HepG2 (cell line): ENCODE measurements at regions of chr21 and their contacts with region 1.

Region 1: DNA sequence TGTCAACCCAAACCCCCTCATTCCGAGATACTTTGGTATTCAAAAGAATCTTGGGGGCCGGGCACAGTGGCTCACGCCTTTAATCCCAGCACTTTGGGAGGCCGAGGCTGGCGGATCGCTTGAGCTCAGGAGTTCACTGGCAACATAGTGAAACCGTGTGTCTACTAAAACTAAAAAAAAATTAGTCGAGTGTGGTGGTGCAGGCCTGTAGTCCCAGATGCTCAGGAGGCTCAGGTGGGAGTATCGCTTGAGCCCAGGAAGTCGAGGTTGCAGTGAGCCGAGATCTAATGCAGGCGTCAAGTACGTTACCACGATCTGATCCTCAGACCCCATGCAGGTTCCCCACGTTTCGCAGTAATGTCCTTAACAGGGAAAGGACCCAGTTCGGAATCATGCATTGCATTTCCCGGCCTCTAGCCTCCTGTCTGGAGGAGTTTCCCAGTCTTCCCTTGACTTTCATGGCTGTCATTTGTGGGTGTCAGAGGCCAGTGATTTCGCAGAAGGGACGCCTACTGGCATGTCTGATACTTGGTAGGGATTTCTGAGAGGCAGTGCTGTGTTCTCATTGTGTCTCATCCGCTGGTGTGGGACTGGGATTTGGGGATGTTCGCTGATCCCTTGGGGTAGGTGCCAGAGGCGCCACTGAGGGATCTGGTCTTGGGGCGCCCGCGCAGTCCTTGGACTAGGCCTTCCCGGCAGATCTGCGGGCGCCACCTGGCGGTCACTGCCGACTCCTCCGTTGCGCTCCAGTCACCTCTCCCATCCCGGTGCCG is 39.3 kb upstream of the HMGN1 start:
- DNase-seq: peak; percentile 67
- ATAC-seq: peak; percentile 80
- H3K4me3 ChIP-seq: peak overlapping the region; percentile 54 to 70 (median 55)
- H3K27ac ChIP-seq: peak overlapping the region; percentile 69
- H3K4me1 ChIP-seq: peaks cover 32% of the 10 kb centered on the region
- H3K27me3 ChIP-seq: no peaks in the 10 kb centered on the region
- CTCF ChIP-seq: peak; percentile 97
- EP300 ChIP-seq: no peak
- POLR2A ChIP-seq: peak in 1 of 2 experiments; percentile 37; a peak in 1 of 4 replicates
- RAD21 ChIP-seq: peak; percentile 94

Region 2: DNA sequence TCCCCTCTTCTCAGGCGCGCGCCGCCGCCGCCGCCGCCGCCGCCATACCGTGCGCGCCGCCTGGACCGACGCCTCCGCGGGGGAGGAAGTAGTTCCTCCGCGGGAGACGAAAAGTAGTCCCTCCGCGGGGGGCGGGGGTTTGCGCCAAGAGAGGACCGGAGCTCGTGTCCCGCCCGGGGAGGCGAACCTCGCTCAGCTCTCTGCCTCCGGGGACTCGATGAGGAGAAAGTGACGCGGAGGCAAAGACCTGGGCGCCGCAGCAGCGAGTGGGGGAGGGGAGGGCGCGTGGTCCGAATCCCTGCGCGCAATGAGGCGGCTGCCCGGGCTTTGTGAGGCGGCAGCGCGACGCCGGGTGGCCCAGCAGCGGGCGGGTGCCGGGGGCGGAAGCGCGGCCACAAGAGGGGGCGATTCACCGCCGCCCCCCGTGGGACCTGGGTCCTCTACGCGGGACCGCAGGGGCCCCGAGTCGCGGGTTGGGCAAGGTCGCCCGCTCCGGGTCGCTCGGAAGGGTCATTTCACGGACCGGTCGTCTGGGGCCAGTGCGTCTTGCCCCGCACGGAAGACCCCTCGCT is 74.6 kb before region 1 on chr21 and contains the start of gene BRWD1:
- CTCF ChIA-PET with region 1: interaction called, 10 read pairs
- POLR2A ChIA-PET with region 1: interaction called, 47 read pairs
- in situ Hi-C with region 1: no loop called
- intact Hi-C with region 1: loop called (anchors 2 kb)
- DNase-seq: peak; percentile 72
- ATAC-seq: peak; percentile 77
- H3K4me3 ChIP-seq: peak within 1 kb of the TSS; percentile 61 to 76 (median 72)
- H3K27ac ChIP-seq: peak within 1 kb of the TSS; percentile 98
- H3K4me1 ChIP-seq: peaks cover 41% of the 10 kb centered on the region
- H3K27me3 ChIP-seq: no peaks in the 10 kb centered on the region; a peak in 1 of 5 replicates
- CTCF ChIP-seq: peak; percentile 60
- EP300 ChIP-seq: no peak
- POLR2A ChIP-seq: peak; percentile 49 to 58; a peak in 3 of 4 replicates
- RAD21 ChIP-seq: peak; percentile 68
- total RNA-seq, gene BRWD1: 28.0 and 28.7 TPM in 2 replicates

Region 3: DNA sequence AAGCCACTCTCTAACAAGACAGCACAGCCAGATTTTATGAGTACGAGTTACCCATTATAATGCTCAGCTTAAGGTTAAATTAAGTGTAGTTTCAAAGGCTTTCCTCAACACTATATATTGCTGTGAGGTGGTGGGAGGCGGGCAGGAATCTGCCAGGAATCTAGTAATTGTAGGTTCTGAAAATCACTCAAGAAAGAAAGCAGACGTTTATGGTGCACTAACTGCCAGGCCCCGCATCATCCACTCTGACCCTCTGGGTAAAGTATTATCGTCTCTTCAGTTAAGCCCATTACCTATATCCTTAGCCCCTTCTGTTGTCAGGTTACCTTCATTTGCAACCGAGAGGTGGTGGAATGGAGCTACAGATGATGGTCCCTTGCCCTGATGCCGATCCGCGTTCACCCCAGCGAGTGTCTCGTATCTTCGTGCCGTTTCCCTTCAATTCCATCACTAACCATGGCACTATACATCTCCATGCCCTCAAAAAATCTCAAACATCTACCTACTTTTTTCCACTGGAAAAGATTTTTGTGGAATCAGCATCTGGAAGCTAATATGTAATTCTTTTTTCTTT is 51.7 kb before region 1 on chr21:
- CTCF ChIA-PET with region 1: interaction called, 17 read pairs
- POLR2A ChIA-PET with region 1: interaction called, 6 read pairs
- in situ Hi-C with region 1: no loop called
- intact Hi-C with region 1: loop called (anchors 1 kb)
- DNase-seq: peak; percentile 68
- ATAC-seq: peak; percentile 97
- H3K4me3 ChIP-seq: peak overlapping the region in 1 of 3 experiments; percentile 57; a peak in 3 of 6 replicates
- H3K27ac ChIP-seq: no peak overlapping the region
- H3K4me1 ChIP-seq: peaks cover 18% of the 10 kb centered on the region
- H3K27me3 ChIP-seq: no peaks in the 10 kb centered on the region
- CTCF ChIP-seq: peak; percentile 77
- EP300 ChIP-seq: no peak
- POLR2A ChIP-seq: no peak
- RAD21 ChIP-seq: peak; percentile 66; the same call in 1 of the 2 replicates

Region 4: GRCh38 chr21:39349211-39350093 is 38.8 kb before region 1 on chr21:
- CTCF ChIA-PET with region 1: no interaction called
- POLR2A ChIA-PET with region 1: interaction called, 29 read pairs
- in situ Hi-C with region 1: loop called (anchors 5 kb)
- intact Hi-C with region 1: loop called (anchors 1 kb)
- DNase-seq: peak; percentile 93
- ATAC-seq: peak; percentile 95
- H3K4me3 ChIP-seq: peak overlapping the region; percentile 73 to 83 (median 82)
- H3K27ac ChIP-seq: peak overlapping the region; percentile 96
- H3K4me1 ChIP-seq: peaks cover 40% of the 10 kb centered on the region
- H3K27me3 ChIP-seq: no peaks in the 10 kb centered on the region; a peak in 1 of 5 replicates
- CTCF ChIP-seq: no peak
- EP300 ChIP-seq: no peak
- POLR2A ChIP-seq: peak; percentile 56 to 91; a peak in 3 of 4 replicates
- RAD21 ChIP-seq: peak; percentile 25; the same call in 1 of the 2 replicates

Region 5: GRCh38 chr21:39373644-39374043 is 14.6 kb before region 1 on chr21:
- CTCF ChIA-PET with region 1: interaction called, 25 read pairs
- POLR2A ChIA-PET with region 1: interaction called, 9 read pairs
- in situ Hi-C with region 1: no loop called
- intact Hi-C with region 1: loop called (anchors 1 kb)
- DNase-seq: peak; percentile 62
- ATAC-seq: peak; percentile 96
- H3K4me3 ChIP-seq: peak overlapping the region in 1 of 3 experiments; percentile 15; a peak in 1 of 6 replicates
- H3K27ac ChIP-seq: no peak overlapping the region
- H3K4me1 ChIP-seq: peaks cover 38% of the 10 kb centered on the region
- H3K27me3 ChIP-seq: no peaks in the 10 kb centered on the region; a peak in 1 of 5 replicates
- CTCF ChIP-seq: peak; percentile 73
- EP300 ChIP-seq: no peak
- POLR2A ChIP-seq: no peak
- RAD21 ChIP-seq: peak; percentile 65

Region 6: DNA sequence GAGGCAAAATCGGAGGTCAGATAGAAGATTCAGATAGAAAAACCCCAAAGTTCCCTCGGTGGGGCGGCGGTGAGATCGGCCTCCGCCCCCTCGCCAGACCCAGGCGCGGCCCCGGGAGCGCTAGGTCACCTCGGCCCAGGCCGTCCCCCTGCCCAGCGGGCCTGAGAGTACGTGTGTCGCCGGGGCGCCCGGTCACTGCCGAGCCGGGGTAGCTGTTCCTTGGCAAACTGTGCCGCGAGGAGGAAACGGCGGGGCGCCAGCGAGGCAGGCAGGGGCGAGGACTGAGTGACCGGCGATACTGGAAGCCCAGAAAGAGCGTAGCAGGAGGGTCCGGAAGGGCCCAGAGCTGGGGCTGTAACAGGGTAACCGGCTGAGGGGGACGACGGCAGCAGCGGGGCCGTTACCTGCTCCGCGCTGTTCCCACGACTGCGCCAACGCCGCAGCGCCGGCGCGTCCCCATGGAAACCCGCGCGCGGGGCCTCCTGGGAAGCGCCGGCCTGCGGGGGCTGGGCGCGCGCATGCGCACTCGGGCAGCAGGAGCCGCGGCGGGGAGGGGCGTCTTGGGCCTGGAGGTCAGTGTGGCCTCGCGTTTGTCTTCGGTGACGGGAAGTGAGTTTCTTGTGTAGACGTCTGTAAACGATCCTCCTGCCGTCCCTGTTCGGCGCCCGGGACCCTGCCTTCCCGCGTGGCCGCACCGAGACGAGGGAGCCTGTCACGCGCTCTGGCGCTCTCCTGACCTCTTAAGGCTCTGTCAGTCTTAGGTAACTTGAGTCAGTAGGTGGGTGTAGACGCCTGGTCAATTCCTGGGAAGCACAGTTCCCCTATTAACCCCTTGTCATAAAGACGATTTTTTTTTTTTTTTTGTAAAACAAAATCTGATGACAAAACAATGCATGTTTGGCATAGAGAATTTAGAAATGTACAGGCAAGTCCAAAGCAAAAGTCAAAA is 57.4 kb after region 1 on chr21 and contains the start of gene LCA5L:
- CTCF ChIA-PET with region 1: interaction called, 4 read pairs
- POLR2A ChIA-PET with region 1: interaction called, 3 read pairs
- in situ Hi-C with region 1: no loop called
- intact Hi-C with region 1: loop called (anchors 5 kb)
- DNase-seq: peak; percentile 76
- ATAC-seq: peak; percentile 95
- H3K4me3 ChIP-seq: peak within 1 kb of the TSS; percentile 71 to 82 (median 80)
- H3K27ac ChIP-seq: peak within 1 kb of the TSS; percentile 66
- H3K4me1 ChIP-seq: peaks cover 13% of the 10 kb centered on the region
- H3K27me3 ChIP-seq: peaks cover 0 to 2% of the 10 kb centered on the region in 2 experiments; a peak in 1 of 5 replicates
- CTCF ChIP-seq: peak; percentile 27
- EP300 ChIP-seq: peak in 1 of 2 experiments; percentile 47; a peak in 1 of 4 replicates
- POLR2A ChIP-seq: peak; percentile 40 to 91; a peak in 2 of 4 replicates
- RAD21 ChIP-seq: 0 out of 2 replicates have a peak, but pooled peaks have one; percentile 5
- total RNA-seq, gene LCA5L: 0.55 and 0.66 TPM in 2 replicates